Esophagus squamous epithelium (tissue), 5 donors: ENCODE measurements at regions of chr19 and their contacts with region 1.

Region 1: DNA sequence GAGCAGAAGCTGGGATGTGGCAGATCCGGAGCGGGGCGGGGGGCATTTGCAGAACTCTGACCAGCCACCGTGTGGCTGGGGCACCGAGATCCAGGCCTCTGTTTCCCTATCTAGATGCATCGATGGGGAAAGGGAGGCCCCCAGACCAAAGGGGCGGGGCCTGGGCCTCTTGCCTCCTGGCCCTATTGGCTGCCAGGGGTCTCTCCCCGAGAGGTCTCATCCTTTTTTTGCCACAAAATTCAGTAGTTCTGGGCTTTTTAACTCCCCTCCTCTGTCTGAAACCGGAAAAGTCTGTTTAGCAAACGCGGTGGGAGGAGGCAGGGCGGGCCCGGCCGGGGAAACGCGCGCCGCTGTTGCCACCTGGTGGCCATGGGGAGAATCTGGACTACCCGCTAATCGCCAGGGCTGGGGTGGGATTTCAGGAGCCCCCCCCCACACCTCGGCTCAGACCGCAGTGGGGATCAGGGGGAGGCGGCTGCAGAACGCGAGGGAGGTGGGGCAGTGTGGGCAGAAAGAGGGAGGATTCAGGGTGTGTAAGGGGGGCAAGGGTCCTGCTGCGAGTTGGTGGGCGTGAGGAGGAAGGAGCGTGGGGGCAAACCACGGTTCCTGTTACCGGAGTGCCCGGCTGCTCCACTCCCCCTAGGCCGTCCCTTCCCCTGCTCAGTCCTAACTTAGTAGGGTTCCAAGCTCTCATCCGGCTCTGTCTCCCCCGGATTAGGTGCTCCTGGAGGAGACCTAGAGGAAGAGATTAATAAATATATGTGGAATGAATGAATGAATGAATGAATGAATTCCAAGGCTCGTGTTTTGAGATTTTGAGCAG is 28.3 kb downstream of the IL12RB1 start:
- DNase-seq: peak; percentile 10
- H3K4me3 ChIP-seq: peak overlapping the region in 3 of 4 donors; percentile 19 to 30 (median 24)
- H3K27ac ChIP-seq: peak overlapping the region; percentile 68 to 86 (median 86)
- H3K4me1 ChIP-seq: peaks cover 15 to 21% (median 15%) of the 10 kb centered on the region in 3 donors
- H3K27me3 ChIP-seq: peaks cover 0 to 5% (median 0%) of the 10 kb centered on the region in 4 donors
- CTCF ChIP-seq: peak; percentile 88 to 98 (median 97)
- POLR2A ChIP-seq: no peak

Region 2: GRCh38 chr19:18007044-18007916 is 51.1 kb before region 1 on chr19:
- intact Hi-C with region 1: loop called (anchors 2 kb)
- DNase-seq: no peak
- H3K4me3 ChIP-seq: peak overlapping the region; percentile 39 to 78 (median 62)
- H3K27ac ChIP-seq: peak overlapping the region; percentile 86 to 94 (median 92)
- H3K4me1 ChIP-seq: peaks cover 18 to 53% (median 18%) of the 10 kb centered on the region in 3 donors
- H3K27me3 ChIP-seq: no peaks in the 10 kb centered on the region
- CTCF ChIP-seq: peak; percentile 96 to 99 (median 98)
- POLR2A ChIP-seq: peak in 1 of 4 donors; percentile 40